Dendritic cell treated with granulocyte-macrophage colony-stimulating factor and Interleukin-4, amounts not matched to agents 40 ng/mL and 50 ng/mL, for 4 days (primary cell): ENCODE measurements at regions of chr13 and their contacts with region 1.

Region 1: GRCh38 chr13:79336966-79337365 is 69.1 kb downstream of the RBM26 start:
- H3K4me3 Mint-ChIP-seq: no peak overlapping the region
- H3K27ac Mint-ChIP-seq: peak overlapping the region; percentile 26
- H3K4me1 Mint-ChIP-seq: peaks cover 5% of the 10 kb centered on the region
- H3K27me3 Mint-ChIP-seq: no peaks in the 10 kb centered on the region

Region 2: GRCh38 chr13:78540058-78540457 is 796.9 kb before region 1 on chr13:
- intact Hi-C with region 1: no loop called
- H3K4me3 Mint-ChIP-seq: no peak overlapping the region
- H3K27ac Mint-ChIP-seq: no peak overlapping the region
- H3K4me1 Mint-ChIP-seq: no peaks in the 10 kb centered on the region
- H3K27me3 Mint-ChIP-seq: peaks cover 2% of the 10 kb centered on the region

Region 3: DNA sequence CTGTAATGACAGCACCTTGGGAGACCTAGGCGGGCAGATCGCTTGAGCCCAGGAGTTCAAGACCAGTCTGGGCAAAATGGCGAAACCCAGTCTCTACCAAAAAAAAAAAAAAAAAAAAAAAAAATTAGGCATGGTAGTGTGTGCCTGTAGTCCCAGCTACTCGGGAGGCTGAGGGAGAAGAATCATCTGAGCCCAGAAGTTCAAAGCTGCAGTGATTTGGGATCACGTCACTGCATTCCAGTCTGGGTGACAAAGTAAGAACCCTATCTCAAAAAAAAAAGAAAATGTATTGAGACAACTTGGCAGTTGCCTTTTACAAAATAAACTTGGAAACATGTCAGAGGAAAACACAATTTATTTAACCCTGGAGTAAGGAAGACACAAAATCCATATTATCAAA is 42.3 kb after region 1 on chr13:
- intact Hi-C with region 1: loop called (anchors 5 kb)
- H3K4me3 Mint-ChIP-seq: no peak overlapping the region
- H3K27ac Mint-ChIP-seq: no peak overlapping the region
- H3K4me1 Mint-ChIP-seq: peaks cover 21% of the 10 kb centered on the region
- H3K27me3 Mint-ChIP-seq: no peaks in the 10 kb centered on the region

Region 4: GRCh38 chr13:79936368-79937136 is 599.6 kb after region 1 on chr13:
- intact Hi-C with region 1: no loop called
- H3K4me3 Mint-ChIP-seq: no peak overlapping the region
- H3K27ac Mint-ChIP-seq: no peak overlapping the region
- H3K4me1 Mint-ChIP-seq: no peaks in the 10 kb centered on the region
- H3K27me3 Mint-ChIP-seq: no peaks in the 10 kb centered on the region